Caco-2 (cell line): ENCODE measurements at regions of chr7 and their contacts with region 1.

Region 1: DNA sequence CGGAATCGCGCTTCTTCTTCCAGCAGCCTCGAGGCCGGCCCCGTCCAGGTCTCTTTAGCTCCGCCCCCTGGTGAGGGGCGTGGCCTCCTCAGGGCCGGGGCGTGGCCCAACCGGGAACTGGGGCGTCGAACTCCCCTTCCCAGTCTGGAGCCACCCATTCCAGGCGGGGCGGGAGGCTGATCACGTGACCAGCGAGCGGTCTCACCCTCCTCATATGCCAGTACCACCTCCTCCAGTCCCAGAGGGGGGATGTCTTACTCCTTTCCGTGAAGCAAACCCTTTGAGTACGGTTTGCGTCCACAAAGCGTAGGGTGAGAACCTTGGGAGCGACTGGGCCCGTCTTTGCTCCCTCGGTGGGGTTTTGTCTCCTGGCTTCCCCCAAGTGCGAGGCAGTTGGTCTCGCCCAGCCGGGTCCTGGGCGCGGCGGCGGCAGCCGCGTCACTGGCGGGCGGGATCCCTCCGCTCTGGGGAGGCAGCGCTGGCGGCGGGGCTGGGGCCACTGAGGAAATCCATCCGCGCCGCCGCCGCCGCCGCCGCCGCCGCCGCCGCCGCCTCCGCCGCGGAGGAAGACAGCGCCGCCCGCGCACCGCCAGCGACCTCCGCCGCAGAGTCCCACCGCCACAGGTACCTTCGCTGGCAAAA is at the start of gene GNB2:
- DNase-seq: peak; percentile 100
- H3K4me3 ChIP-seq: peak within 1 kb of the TSS; percentile 100
- H3K4me3 Mint-ChIP-seq: peak within 1 kb of the TSS; percentile 85
- H3K27ac Mint-ChIP-seq: peak within 1 kb of the TSS; percentile 94
- H3K4me1 ChIP-seq: no peaks in the 10 kb centered on the region
- H3K4me1 Mint-ChIP-seq: no peaks in the 10 kb centered on the region
- H3K27me3 ChIP-seq: no peaks in the 10 kb centered on the region
- H3K27me3 Mint-ChIP-seq: no peaks in the 10 kb centered on the region
- CTCF ChIP-seq: no peak
- total RNA-seq, gene GNB2: 200 and 216 TPM in 2 replicates

Region 2: DNA sequence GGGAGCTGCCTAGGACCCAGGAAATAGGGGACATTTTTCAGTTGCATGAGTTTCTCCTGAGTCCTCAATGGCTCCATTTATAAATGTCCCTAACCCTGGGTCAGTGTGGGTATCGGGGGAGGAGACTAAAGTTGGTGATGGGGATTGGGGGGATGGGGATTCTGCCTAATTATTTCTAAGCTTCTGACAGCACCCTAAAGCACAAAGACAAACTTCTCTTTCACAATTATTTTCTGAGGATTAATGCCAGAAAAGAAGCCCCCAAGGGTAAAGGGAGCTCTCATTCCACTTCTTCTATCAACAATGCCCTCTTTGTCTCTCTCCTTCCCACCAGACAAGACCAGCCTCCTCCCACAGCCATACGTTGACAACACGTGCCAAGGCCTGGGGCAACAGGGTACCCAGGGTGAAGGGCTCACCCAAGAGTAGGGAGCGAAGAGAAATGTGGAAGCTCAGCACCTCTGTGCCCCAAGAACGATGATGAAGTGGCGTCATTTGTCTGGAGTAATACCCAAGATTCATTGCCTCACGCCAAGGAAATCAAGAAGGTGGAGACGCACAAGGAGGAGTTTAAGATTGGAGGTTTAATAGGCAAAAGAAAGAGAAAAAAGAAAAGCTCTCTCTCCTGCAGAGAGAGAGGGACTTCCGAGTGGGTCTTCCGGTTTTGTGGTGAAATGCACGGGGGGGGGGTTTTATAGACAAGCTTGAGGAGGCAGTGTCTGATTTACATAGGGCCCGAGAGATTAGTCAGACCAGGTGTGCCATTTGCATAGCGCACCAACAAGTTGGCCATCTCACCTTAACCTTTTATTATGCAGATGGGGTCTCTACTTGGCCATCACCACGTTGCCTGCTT is 729.6 kb before region 1 on chr7:
- CTCF ChIA-PET with region 1: no interaction called
- POLR2A ChIA-PET with region 1: no interaction called
- intact Hi-C with region 1: no loop called
- DNase-seq: no peak
- H3K4me3 ChIP-seq: no peak overlapping the region
- H3K4me3 Mint-ChIP-seq: no peak overlapping the region
- H3K27ac Mint-ChIP-seq: no peak overlapping the region
- H3K4me1 ChIP-seq: no peaks in the 10 kb centered on the region
- H3K4me1 Mint-ChIP-seq: no peaks in the 10 kb centered on the region
- H3K27me3 ChIP-seq: no peaks in the 10 kb centered on the region
- H3K27me3 Mint-ChIP-seq: peaks cover 2% of the 10 kb centered on the region
- CTCF ChIP-seq: no peak

Region 3: GRCh38 chr7:100489824-100490223 is 183.6 kb before region 1 on chr7:
- CTCF ChIA-PET with region 1: no interaction called
- POLR2A ChIA-PET with region 1: no interaction called
- intact Hi-C with region 1: no loop called
- DNase-seq: peak; percentile 80 to 83
- H3K4me3 ChIP-seq: no peak overlapping the region
- H3K4me3 Mint-ChIP-seq: no peak overlapping the region
- H3K27ac Mint-ChIP-seq: peak overlapping the region; percentile 26
- H3K4me1 ChIP-seq: no peaks in the 10 kb centered on the region
- H3K4me1 Mint-ChIP-seq: peaks cover 7% of the 10 kb centered on the region
- H3K27me3 ChIP-seq: no peaks in the 10 kb centered on the region
- H3K27me3 Mint-ChIP-seq: no peaks in the 10 kb centered on the region
- CTCF ChIP-seq: no peak

Region 4: GRCh38 chr7:100611974-100612729 is 61.3 kb before region 1 on chr7 and contains the start of gene MOSPD3:
- CTCF ChIA-PET with region 1: interaction called, 5 read pairs
- POLR2A ChIA-PET with region 1: interaction called, 5 read pairs
- intact Hi-C with region 1: loop called (anchors 1 kb)
- DNase-seq: peak; percentile 99
- H3K4me3 ChIP-seq: peak within 1 kb of the TSS; percentile 50
- H3K4me3 Mint-ChIP-seq: peak within 1 kb of the TSS; percentile 86
- H3K27ac Mint-ChIP-seq: peak within 1 kb of the TSS; percentile 95
- H3K4me1 ChIP-seq: peaks cover 10% of the 10 kb centered on the region; the same call in 1 of the 2 replicates
- H3K4me1 Mint-ChIP-seq: no peaks in the 10 kb centered on the region
- H3K27me3 ChIP-seq: no peaks in the 10 kb centered on the region
- H3K27me3 Mint-ChIP-seq: no peaks in the 10 kb centered on the region
- CTCF ChIP-seq: no peak
- total RNA-seq, gene MOSPD3: 24.6 and 24.7 TPM in 2 replicates

Region 5: GRCh38 chr7:100655908-100656674 is 17.3 kb before region 1 on chr7 and contains the start of gene ACTL6B:
- CTCF ChIA-PET with region 1: no interaction called
- POLR2A ChIA-PET with region 1: no interaction called
- intact Hi-C with region 1: loop called (anchors 2 kb)
- DNase-seq: peak in 1 of 2 experiments; percentile 51
- H3K4me3 ChIP-seq: no peak within 1 kb of the TSS
- H3K4me3 Mint-ChIP-seq: no peak within 1 kb of the TSS
- H3K27ac Mint-ChIP-seq: no peak within 1 kb of the TSS
- H3K4me1 ChIP-seq: peaks cover 6% of the 10 kb centered on the region
- H3K4me1 Mint-ChIP-seq: no peaks in the 10 kb centered on the region
- H3K27me3 ChIP-seq: no peaks in the 10 kb centered on the region; the same call in 1 of the 2 replicates
- H3K27me3 Mint-ChIP-seq: no peaks in the 10 kb centered on the region
- CTCF ChIP-seq: no peak
- total RNA-seq, gene ACTL6B: not detected in 2 replicates